Endothelial cell of umbilical vein (primary cell): ENCODE measurements at regions of chrX and their contacts with region 1.

Region 1: DNA sequence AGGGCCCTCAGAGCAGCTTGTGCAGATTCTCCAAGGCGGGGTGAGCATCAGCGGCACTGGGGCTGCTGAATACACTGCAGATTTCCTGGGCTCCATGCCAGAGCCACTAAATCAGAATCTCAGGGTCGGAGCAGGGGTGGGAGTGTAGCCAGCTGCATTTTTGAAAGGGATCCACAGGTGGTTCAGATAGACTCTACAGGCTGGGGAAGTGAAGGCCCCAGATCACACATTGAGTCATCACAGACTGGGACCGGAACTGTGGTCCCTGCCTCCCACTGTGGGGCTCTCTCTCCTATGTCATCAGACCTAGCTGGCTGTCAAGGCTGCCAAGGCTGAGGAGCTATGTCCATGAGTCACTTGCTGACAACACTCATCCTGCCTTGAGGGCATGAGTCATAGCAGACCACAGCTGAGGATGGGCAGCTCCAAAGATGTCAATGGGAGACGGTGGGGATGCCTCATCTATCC is 162.3 kb upstream of the MAMLD1 start:
- DNase-seq: peak; percentile 73
- H3K4me3 ChIP-seq: no peak overlapping the region
- H3K27ac ChIP-seq: no peak overlapping the region
- H3K4me1 ChIP-seq: peaks cover 11% of the 10 kb centered on the region
- H3K27me3 ChIP-seq: no peaks in the 10 kb centered on the region
- CTCF ChIP-seq: no peak
- POLR2A ChIP-seq: no peak

Region 2: DNA sequence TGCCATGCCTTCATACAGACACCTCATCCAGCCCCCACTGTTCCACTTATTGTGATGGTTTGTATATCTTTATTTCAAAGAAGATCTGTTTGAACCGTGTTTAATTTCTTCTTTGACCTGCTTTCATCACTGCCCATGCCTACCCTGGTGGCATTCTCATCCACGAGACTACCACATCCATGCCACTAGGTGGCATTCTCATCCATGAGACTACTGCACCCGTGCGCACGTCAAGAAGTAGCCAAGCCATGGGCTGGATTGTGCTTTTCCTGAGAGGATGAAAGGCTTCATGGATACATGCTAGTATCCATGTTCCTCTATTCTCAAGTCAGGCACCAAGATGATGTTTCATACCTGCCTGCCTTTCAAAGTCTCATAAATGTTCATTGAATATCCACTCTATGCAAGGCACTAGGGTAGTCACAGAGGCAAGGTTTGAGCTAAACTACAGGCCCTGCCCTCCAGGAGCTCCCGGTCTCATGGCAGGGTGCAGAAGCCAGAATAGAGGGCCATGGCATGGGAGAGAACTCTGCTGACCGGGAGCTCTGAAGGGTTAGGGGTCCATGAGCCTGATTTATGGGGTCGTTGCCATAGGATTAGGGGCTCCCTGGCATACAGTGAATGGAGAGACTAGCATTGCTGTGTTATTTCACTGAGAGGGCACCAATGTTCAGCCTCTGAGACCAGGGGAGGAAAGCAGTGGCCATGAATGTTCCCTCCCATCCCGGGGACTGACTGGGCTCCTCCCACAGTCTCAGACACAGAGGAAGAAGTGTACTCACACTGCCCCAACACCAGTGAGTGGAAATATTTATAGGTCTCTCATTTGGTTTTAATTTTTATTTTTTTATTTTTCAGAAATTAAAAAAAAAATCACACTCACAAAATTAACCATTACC is 237.7 kb before region 1 on chrX:
- CTCF ChIA-PET with region 1: interaction called, 3 read pairs
- POLR2A ChIA-PET with region 1: no interaction called
- dilution Hi-C with region 1: no loop called
- intact Hi-C with region 1: loop called (anchors 5 kb)
- DNase-seq: peak; percentile 59
- H3K4me3 ChIP-seq: no peak overlapping the region
- H3K27ac ChIP-seq: no peak overlapping the region
- H3K4me1 ChIP-seq: no peaks in the 10 kb centered on the region
- H3K27me3 ChIP-seq: no peaks in the 10 kb centered on the region
- CTCF ChIP-seq: peak; percentile 54 to 60
- POLR2A ChIP-seq: no peak

Region 3: DNA sequence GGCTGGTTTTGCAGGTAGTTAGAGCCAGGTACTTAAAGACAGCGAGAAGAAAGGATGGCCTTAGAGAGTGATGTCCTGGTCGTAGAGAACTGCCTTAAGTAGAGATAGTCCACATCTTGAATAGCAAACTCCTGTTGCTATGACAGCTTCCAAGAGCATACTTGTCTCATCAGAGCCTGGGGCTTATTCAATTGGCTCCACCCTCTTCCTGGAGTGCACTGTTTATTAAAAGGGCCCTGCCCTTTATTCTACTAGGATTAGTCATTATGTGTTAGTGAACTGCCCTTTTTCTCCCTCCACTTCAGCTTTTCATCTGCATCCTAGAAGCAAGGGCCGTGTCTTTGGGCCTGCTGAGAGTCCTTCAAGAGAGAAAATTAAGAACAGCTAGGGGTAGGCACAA is 168.1 kb before region 1 on chrX:
- CTCF ChIA-PET with region 1: no interaction called
- POLR2A ChIA-PET with region 1: no interaction called
- dilution Hi-C with region 1: no loop called
- intact Hi-C with region 1: loop called (anchors 5 kb)
- DNase-seq: peak; percentile 40
- H3K4me3 ChIP-seq: no peak overlapping the region
- H3K27ac ChIP-seq: no peak overlapping the region
- H3K4me1 ChIP-seq: peaks cover 34% of the 10 kb centered on the region
- H3K27me3 ChIP-seq: no peaks in the 10 kb centered on the region
- CTCF ChIP-seq: no peak
- POLR2A ChIP-seq: no peak

Region 4: GRCh38 chrX:150155436-150156035 is 45.3 kb before region 1 on chrX:
- CTCF ChIA-PET with region 1: no interaction called
- POLR2A ChIA-PET with region 1: no interaction called
- dilution Hi-C with region 1: no loop called
- intact Hi-C with region 1: loop called (anchors 10 kb)
- DNase-seq: peak; percentile 15
- H3K4me3 ChIP-seq: no peak overlapping the region
- H3K27ac ChIP-seq: no peak overlapping the region
- H3K4me1 ChIP-seq: no peaks in the 10 kb centered on the region
- H3K27me3 ChIP-seq: no peaks in the 10 kb centered on the region
- CTCF ChIP-seq: no peak
- POLR2A ChIP-seq: no peak

Region 5: GRCh38 chrX:150326541-150327247 is 125.8 kb after region 1 on chrX:
- CTCF ChIA-PET with region 1: interaction called, 4 read pairs
- POLR2A ChIA-PET with region 1: no interaction called
- dilution Hi-C with region 1: no loop called
- intact Hi-C with region 1: loop called (anchors 5 kb)
- DNase-seq: peak; percentile 1
- H3K4me3 ChIP-seq: no peak overlapping the region
- H3K27ac ChIP-seq: no peak overlapping the region
- H3K4me1 ChIP-seq: peaks cover 31% of the 10 kb centered on the region
- H3K27me3 ChIP-seq: no peaks in the 10 kb centered on the region
- CTCF ChIP-seq: no peak
- POLR2A ChIP-seq: no peak